Activated T-helper 2 cell treated with anti-CD3 and anti-CD28 coated beads, Interferon-gamma antibody, Interleukin-2, Interleukin-4, amounts not matched to agents 10 μg/mL and 5 μg/mL and 100 μg/mL, durations not matched to agents 14 hours and 24 hours and 36 hours (primary cell): ENCODE measurements at regions of chr20 and their contacts with region 1.

Region 1: DNA sequence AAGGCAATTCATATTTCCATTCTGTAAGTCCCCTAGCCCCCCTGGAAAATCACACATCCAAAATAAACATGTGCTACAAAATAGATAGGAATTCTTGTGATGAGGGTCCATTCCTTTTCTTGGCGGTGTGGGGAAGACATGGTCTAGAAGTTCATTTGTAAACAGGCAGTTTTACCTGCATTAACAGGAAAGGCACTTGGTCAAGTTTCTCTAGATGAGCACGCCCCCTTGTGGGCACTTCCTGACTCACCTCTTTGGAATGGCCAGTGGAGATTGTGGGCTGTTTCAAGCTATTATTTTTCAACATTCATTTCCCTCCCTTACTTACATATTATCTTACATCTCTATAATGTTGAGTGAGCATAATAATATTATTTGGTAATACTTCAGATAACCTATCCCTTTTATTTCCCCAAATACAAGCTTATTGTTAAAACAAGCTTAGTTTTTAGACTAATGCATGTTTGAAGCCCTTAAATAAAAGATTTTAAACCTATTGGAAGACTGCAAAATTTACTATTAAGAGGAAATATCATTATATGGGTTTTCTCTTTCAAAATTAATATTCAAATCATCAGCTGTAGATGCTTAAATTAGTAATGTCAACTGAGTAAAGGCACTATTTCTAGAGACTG is 92.1 kb downstream of the TASP1 start:
- DNase-seq: peak; percentile 52
- H3K4me3 Mint-ChIP-seq: no peak overlapping the region
- H3K27ac Mint-ChIP-seq: no peak overlapping the region
- H3K4me1 Mint-ChIP-seq: peaks cover 5% of the 10 kb centered on the region
- H3K27me3 Mint-ChIP-seq: no peaks in the 10 kb centered on the region

Region 2: DNA sequence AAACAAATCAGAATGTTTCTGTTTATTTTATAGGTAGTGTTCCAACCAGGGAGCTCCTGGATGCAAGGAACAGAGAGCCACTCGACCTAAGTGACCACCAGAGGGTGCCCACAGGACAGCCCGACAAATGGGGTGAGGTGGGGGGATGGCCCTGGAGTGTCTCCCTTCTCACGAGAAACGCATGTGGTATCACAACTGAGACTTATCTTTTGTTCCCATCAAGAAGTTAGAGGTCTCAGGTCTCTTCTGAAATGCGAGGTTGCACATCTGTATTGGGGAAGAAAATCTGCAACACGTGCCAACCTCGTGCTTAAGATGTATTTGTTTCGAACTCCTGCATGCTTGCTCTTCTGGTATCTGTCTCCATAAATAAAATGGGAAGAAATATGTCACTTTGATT is 221.6 kb before region 1 on chr20:
- intact Hi-C with region 1: loop called (anchors 1 kb)
- DNase-seq: no peak
- H3K4me3 Mint-ChIP-seq: no peak overlapping the region
- H3K27ac Mint-ChIP-seq: peak overlapping the region; percentile 18
- H3K4me1 Mint-ChIP-seq: peaks cover 26% of the 10 kb centered on the region
- H3K27me3 Mint-ChIP-seq: peaks cover 1% of the 10 kb centered on the region

Region 3: GRCh38 chr20:13458860-13459451 is 87.7 kb before region 1 on chr20:
- intact Hi-C with region 1: loop called (anchors 2 kb)
- DNase-seq: no peak
- H3K4me3 Mint-ChIP-seq: no peak overlapping the region
- H3K27ac Mint-ChIP-seq: no peak overlapping the region
- H3K4me1 Mint-ChIP-seq: peaks cover 2% of the 10 kb centered on the region
- H3K27me3 Mint-ChIP-seq: no peaks in the 10 kb centered on the region

Region 4: GRCh38 chr20:13771853-13772453 is 225.3 kb after region 1 on chr20:
- intact Hi-C with region 1: loop called (anchors 5 kb)
- DNase-seq: no peak
- H3K4me3 Mint-ChIP-seq: no peak overlapping the region
- H3K27ac Mint-ChIP-seq: no peak overlapping the region
- H3K4me1 Mint-ChIP-seq: peaks cover 12% of the 10 kb centered on the region
- H3K27me3 Mint-ChIP-seq: no peaks in the 10 kb centered on the region